ENCODE measurements at regions of chr12 and their contacts with region 1.

Region 1: GRCh38 chr12:50167041-50167828 is at the start of gene CERS5:
- DNase-seq: peak; percentile 91 to 100 (median 96)

Region 2: GRCh38 chr12:50111693-50112455 is 55.4 kb before region 1 on chr12 and contains the start of gene COX14:
- intact Hi-C with region 1: loop called (anchors 1 kb)
- DNase-seq: peak; percentile 97 to 100 (median 99)

Measured in posterior cingulate gyrus (tissue), 11 donors.